ENCODE measurements at regions of chr16 and their contacts with region 1.

Region 1: GRCh38 chr16:25051406-25052150 is 36.4 kb upstream of the ARHGAP17 start:
- DNase-seq: no peak
- ATAC-seq: peak; percentile 13 to 28
- H3K4me3 ChIP-seq: peak overlapping the region; percentile 2 to 37 (median 32)
- H3K27ac ChIP-seq: peak overlapping the region; percentile 63 to 93 (median 78)
- H3K4me1 ChIP-seq: peaks cover 25 to 27% of the 10 kb centered on the region in 2 donors
- H3K27me3 ChIP-seq: no peaks in the 10 kb centered on the region
- CTCF ChIP-seq: no peak
- POLR2A ChIP-seq: no peak

Region 2: DNA sequence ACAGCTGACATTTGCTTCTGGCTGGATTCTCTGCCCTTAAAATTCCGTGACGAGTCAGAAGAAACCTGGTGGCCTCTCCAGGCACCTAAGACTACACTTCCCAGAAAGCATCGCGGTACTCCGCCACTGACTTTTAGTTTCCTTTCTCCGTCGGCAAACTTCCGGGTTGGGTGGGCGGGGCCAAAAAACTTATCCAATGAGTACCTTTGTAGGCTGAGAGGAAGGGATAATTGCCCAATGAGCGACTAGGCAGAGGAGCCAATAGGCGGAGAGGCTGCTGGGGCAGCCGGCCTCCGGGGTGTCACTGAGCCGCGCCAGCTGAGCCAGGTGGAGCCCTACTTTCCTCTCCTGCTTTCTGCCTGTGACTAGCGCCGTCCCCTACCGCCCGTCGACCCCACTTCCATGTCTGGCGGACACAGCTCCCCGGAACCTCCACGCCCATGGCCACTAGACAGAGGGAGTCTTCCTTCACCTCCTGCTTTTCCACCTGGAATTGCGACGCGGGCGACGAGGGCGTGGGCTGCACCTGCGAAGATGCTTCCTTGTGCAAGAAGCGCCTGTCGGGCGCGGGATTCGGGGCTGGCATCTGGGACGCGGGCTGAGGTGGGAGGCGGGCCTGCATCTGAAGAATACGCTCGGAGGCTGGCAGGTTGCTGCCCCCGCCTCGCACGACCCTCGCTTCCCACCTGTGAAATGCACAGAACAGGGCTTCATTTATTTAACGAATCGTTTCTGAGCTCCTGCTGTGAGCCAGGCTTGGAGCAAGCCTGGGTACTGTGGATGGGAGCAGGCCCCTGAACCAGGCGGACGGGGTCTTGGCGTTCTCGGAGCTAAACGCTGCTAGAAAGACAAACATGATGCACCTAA is 19.9 kb before region 1 on chr16:
- in situ Hi-C with region 1: no loop called
- intact Hi-C with region 1: loop called (anchors 1 kb)
- DNase-seq: peak; percentile 91 to 93
- ATAC-seq: peak; percentile 99 to 100
- H3K4me3 ChIP-seq: peak overlapping the region; percentile 73 to 85 (median 80)
- H3K27ac ChIP-seq: peak overlapping the region; percentile 75 to 88 (median 82)
- H3K4me1 ChIP-seq: peaks cover 8 to 11% of the 10 kb centered on the region in 2 donors
- H3K27me3 ChIP-seq: no peaks in the 10 kb centered on the region
- CTCF ChIP-seq: peak in 1 of 5 experiments; percentile 13
- POLR2A ChIP-seq: peak; percentile 63

Region 3: DNA sequence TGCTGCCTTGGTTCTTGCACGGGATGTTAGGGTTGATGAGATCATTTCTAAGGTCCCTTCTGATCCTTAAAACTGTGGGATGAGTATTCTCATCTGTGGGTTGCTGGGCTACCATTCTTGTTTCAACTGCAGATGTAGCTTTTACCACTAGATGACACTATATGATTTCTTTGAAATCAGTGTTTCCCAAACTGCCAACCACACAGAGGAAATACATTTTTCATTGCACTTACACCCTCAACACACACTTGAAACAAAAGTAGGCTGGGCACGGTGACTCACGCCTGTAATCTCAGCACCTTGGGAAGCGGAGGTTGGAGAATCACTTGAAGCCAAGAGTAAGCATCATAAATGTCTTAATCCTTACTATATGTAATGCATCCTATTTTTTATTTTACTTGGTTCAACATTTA is 75.2 kb after region 1 on chr16:
- in situ Hi-C with region 1: no loop called
- intact Hi-C with region 1: loop called (anchors 1 kb)
- DNase-seq: no peak
- ATAC-seq: no peak
- H3K4me3 ChIP-seq: no peak overlapping the region
- H3K27ac ChIP-seq: no peak overlapping the region
- H3K4me1 ChIP-seq: no peaks in the 10 kb centered on the region
- H3K27me3 ChIP-seq: no peaks in the 10 kb centered on the region
- CTCF ChIP-seq: no peak
- POLR2A ChIP-seq: no peak

Region 4: GRCh38 chr16:25224731-25225319 is 173.2 kb after region 1 on chr16:
- in situ Hi-C with region 1: loop called (anchors 5 to 10 kb)
- intact Hi-C with region 1: loop called (anchors 2 kb)
- DNase-seq: no peak
- ATAC-seq: no peak
- H3K4me3 ChIP-seq: no peak overlapping the region
- H3K27ac ChIP-seq: no peak overlapping the region
- H3K4me1 ChIP-seq: no peaks in the 10 kb centered on the region
- H3K27me3 ChIP-seq: no peaks in the 10 kb centered on the region
- CTCF ChIP-seq: no peak
- POLR2A ChIP-seq: no peak

Region 5: GRCh38 chr16:25257504-25257955 is 206.0 kb after region 1 on chr16 and contains the start of gene ZKSCAN2:
- in situ Hi-C with region 1: no loop called
- intact Hi-C with region 1: loop called (anchors 10 kb)
- DNase-seq: peak; percentile 86 to 87
- ATAC-seq: peak; percentile 83 to 90
- H3K4me3 ChIP-seq: peak within 1 kb of the TSS; percentile 79 to 93 (median 90)
- H3K27ac ChIP-seq: peak within 1 kb of the TSS; percentile 90 to 99 (median 98)
- H3K4me1 ChIP-seq: peaks cover 36 to 49% of the 10 kb centered on the region in 2 donors
- H3K27me3 ChIP-seq: no peaks in the 10 kb centered on the region
- CTCF ChIP-seq: no peak
- POLR2A ChIP-seq: peak; percentile 95 to 96
- total RNA-seq, gene ZKSCAN2: 2.9 to 6.9 (median 5.2) TPM

Region 6: DNA sequence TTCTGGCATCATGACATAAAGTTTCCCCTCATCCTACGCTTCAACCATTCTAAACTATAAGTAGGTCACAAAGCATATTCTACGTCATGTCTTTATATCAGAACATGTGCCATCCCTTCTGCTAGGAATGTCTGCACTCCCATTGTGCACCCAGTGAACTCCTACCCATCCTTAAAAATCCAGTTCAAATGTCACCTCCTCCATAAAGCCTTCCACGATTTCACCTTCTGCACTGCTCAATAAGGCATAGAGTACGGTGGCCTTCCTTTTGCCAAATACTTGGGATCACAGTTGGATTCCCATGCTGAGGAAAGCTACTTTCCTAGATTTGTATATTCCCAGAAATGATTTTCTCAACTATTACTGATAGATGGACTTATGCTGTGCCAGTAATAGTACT is 392.4 kb after region 1 on chr16:
- in situ Hi-C with region 1: no loop called
- intact Hi-C with region 1: no loop called
- DNase-seq: no peak
- ATAC-seq: no peak
- H3K4me3 ChIP-seq: no peak overlapping the region
- H3K27ac ChIP-seq: no peak overlapping the region
- H3K4me1 ChIP-seq: no peaks in the 10 kb centered on the region
- H3K27me3 ChIP-seq: no peaks in the 10 kb centered on the region
- CTCF ChIP-seq: no peak
- POLR2A ChIP-seq: no peak

Measured in gastrocnemius medialis (tissue), 4 donors.